Activated CD4-positive, alpha-beta memory T cell treated with anti-CD3 and anti-CD28 coated beads for 36 hours (primary cell): ENCODE measurements at regions of chr7 and their contacts with region 1.

Region 1: GRCh38 chr7:2403014-2403717 is at the start of gene CHST12:
- DNase-seq: peak; percentile 96
- H3K4me3 Mint-ChIP-seq: peak within 1 kb of the TSS; percentile 79
- H3K27ac Mint-ChIP-seq: no peak within 1 kb of the TSS
- H3K4me1 Mint-ChIP-seq: peaks cover 45% of the 10 kb centered on the region
- H3K27me3 Mint-ChIP-seq: no peaks in the 10 kb centered on the region
- total RNA-seq, gene CHST12: 3.7 to 3.9 TPM

Region 2: DNA sequence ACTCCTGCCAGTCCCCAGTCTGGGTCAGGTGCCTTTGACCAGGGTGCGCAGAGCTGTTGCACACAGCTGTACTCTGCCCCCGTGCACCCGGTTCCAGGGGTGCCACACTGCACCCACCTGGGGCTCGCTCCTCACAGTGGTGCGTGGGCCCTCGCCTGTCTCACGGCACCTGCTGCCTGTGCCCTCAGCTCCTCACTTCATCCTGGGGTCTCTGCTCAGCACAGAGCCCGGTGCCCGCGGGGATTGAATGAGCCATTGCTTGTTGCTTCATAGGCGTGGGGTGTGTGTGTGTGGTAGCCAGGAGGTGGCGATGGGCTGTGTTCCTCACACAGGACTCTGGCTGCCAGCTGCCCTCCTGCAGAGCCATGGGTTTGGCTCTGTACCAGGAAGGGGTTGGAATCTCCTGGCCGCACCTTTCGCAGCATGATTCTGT is 30.0 kb before region 1 on chr7:
- CTCF ChIA-PET with region 1: no interaction called
- POLR2A ChIA-PET with region 1: no interaction called
- intact Hi-C with region 1: no loop called
- DNase-seq: no peak
- H3K4me3 Mint-ChIP-seq: no peak overlapping the region
- H3K27ac Mint-ChIP-seq: no peak overlapping the region
- H3K4me1 Mint-ChIP-seq: no peaks in the 10 kb centered on the region
- H3K27me3 Mint-ChIP-seq: no peaks in the 10 kb centered on the region

Region 3: GRCh38 chr7:2417981-2418481 is 14.9 kb after region 1 on chr7:
- CTCF ChIA-PET with region 1: interaction called, 3 read pairs
- POLR2A ChIA-PET with region 1: interaction called, 9 read pairs
- intact Hi-C with region 1: loop called (anchors 1 kb)
- DNase-seq: peak; percentile 72
- H3K4me3 Mint-ChIP-seq: no peak overlapping the region
- H3K27ac Mint-ChIP-seq: peak overlapping the region; percentile 18
- H3K4me1 Mint-ChIP-seq: peaks cover 40% of the 10 kb centered on the region
- H3K27me3 Mint-ChIP-seq: no peaks in the 10 kb centered on the region

Region 4: DNA sequence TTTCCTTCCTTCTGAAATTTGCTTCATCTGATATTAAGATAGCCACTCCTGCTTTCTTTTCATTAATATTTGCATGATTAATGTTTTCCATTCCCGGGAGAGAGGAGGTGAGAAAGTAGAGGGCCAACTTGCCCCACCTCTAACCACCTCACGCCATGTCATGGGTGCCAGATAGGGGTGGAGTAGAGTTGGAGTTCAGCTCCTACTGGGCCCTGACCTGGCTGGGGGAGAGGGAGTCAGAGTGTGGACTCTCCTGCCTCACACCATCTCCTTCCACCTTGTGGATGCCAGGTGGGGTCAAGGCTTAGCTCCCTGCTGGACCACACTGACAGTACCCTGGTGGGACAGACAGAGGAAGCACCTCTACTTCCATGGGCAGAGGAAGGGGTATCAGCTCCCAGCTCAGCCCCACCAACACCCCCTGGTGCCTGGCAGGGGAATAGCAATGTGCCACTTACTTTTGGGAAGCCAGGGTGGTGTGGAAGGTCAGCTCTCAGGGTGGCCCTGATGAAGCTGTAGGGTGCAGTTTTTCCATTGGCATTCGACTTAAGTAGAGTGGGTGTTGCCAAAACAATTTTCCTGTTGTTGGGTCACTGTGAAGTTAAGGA is 28.2 kb after region 1 on chr7:
- CTCF ChIA-PET with region 1: interaction called, 46 read pairs
- POLR2A ChIA-PET with region 1: no interaction called
- intact Hi-C with region 1: loop called (anchors 1 kb)
- DNase-seq: peak; percentile 67
- H3K4me3 Mint-ChIP-seq: no peak overlapping the region
- H3K27ac Mint-ChIP-seq: no peak overlapping the region
- H3K4me1 Mint-ChIP-seq: peaks cover 5% of the 10 kb centered on the region
- H3K27me3 Mint-ChIP-seq: no peaks in the 10 kb centered on the region

Region 5: DNA sequence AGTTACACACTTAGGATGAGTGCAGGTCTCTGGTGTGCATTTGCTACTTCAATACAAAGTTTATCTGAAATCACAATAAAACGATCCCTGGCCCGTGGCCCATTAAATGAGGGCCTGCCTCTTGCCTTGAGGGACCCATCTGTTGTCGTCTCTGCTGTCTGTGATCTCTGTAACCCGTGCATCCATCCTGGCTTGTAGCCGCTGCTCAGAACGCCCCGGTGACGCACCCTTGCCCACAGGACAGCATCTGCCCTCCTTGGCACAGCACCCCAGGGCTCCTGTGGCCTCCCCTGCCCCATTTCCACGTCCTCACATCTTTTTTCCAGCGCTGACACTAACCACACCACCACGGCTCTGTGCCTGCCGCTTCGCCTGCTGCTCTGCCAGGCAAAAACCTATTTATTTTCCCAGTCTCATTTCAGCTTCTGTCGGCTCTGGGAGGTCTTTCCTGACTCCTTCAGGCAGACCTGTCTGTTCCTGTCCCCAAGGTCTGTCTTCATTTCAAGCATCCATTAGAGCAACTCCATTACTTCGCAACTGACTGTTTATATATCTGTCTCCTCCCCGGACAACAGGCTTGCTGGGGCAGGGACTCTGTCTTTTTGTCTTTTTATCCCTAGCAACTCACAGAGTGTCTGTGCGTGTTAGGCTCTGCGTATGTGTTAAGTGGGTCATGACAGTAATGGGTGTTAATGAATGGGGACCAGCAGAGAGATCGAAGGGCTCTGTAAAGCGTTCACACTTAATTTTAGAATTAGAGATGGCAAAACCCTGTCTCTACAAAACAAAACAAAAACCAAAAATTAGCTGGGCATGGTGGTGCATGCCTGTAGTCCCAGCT is 624.1 kb after region 1 on chr7:
- CTCF ChIA-PET with region 1: no interaction called
- POLR2A ChIA-PET with region 1: no interaction called
- intact Hi-C with region 1: no loop called
- DNase-seq: no peak
- H3K4me3 Mint-ChIP-seq: no peak overlapping the region
- H3K27ac Mint-ChIP-seq: peak overlapping the region; percentile 96
- H3K4me1 Mint-ChIP-seq: peaks cover 46% of the 10 kb centered on the region
- H3K27me3 Mint-ChIP-seq: no peaks in the 10 kb centered on the region